ENCODE measurements at regions of chr2 and their contacts with region 1.

Region 1: DNA sequence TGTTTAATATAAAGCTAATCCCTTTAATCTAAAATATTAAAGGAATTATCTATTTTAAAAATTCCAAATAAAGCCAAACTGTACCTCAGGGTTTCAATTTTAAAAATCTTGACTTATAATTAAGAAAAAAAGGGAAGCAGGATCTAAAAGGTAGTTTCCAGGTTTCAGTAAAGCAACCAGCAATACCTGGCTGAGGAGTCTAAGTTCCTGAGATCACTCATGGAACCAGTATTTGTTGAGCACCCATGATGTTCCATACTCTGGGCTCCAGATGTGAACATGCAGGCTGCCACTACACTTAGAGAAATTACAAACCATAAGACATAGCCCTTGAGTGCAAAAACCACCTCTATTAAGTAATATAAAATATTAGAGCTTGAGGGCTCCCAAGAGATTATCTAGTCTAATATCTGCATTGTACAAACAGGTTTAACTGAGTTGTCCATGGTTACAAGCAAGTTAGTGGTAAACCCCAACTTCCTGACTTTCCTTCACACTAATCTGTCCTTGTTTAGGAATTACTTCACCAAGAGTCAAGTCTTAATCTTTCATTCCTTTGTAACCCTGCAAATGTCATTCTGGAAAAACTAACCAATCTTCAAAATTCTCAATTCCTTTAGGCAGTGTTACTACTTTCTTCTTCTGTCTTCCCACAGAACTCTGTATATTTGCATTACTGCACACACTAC is 49.2 kb downstream of the CLASP1 start:
- DNase-seq: no peak
- H3K4me3 ChIP-seq: no peak overlapping the region
- H3K27ac ChIP-seq: no peak overlapping the region
- H3K4me1 ChIP-seq: peaks cover 2% of the 10 kb centered on the region
- H3K27me3 ChIP-seq: no peaks in the 10 kb centered on the region
- CTCF ChIP-seq: no peak
- POLR2A ChIP-seq: no peak

Region 2: DNA sequence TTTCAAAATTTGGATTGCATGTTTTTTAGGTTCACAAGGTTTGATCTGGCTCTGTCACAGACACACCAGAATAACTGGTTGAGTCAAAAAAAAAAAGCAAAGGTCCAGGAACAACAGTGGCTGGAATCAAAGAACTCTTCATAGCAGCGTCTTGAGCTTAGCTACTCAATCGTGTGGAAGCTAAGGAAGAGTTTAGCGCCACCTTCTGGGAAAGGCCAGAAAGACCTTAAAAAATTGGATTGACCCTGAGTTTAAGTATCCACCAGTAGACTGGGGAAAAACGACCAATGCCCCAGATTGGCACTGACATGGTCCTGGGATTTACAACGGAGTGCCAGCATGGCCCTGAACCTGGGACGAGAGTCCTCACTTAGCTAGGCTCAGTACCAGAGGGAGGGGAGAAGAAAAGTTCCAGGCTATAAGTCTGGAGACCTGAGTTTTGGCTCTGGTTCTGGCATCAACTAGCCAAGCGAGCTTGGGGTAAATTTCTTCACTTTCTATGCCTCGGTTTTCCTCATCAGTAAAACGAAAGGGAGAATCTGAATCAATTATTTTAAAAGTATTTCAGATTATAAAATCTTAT is 244.0 kb before region 1 on chr2:
- intact Hi-C with region 1: no loop called
- DNase-seq: peak; percentile 74
- H3K4me3 ChIP-seq: no peak overlapping the region
- H3K27ac ChIP-seq: peak overlapping the region; percentile 67 to 76
- H3K4me1 ChIP-seq: peaks cover 1% of the 10 kb centered on the region
- H3K27me3 ChIP-seq: no peaks in the 10 kb centered on the region
- CTCF ChIP-seq: peak; percentile 52 to 80 (median 76)
- POLR2A ChIP-seq: no peak

Region 3: GRCh38 chr2:121710470-121711170 is 110.5 kb after region 1 on chr2:
- intact Hi-C with region 1: loop called (anchors 10 kb)
- DNase-seq: no peak
- H3K4me3 ChIP-seq: no peak overlapping the region
- H3K27ac ChIP-seq: no peak overlapping the region
- H3K4me1 ChIP-seq: no peaks in the 10 kb centered on the region
- H3K27me3 ChIP-seq: no peaks in the 10 kb centered on the region
- CTCF ChIP-seq: no peak
- POLR2A ChIP-seq: no peak